ENCODE measurements at regions of chr9 and their contacts with region 1.

Region 1: DNA sequence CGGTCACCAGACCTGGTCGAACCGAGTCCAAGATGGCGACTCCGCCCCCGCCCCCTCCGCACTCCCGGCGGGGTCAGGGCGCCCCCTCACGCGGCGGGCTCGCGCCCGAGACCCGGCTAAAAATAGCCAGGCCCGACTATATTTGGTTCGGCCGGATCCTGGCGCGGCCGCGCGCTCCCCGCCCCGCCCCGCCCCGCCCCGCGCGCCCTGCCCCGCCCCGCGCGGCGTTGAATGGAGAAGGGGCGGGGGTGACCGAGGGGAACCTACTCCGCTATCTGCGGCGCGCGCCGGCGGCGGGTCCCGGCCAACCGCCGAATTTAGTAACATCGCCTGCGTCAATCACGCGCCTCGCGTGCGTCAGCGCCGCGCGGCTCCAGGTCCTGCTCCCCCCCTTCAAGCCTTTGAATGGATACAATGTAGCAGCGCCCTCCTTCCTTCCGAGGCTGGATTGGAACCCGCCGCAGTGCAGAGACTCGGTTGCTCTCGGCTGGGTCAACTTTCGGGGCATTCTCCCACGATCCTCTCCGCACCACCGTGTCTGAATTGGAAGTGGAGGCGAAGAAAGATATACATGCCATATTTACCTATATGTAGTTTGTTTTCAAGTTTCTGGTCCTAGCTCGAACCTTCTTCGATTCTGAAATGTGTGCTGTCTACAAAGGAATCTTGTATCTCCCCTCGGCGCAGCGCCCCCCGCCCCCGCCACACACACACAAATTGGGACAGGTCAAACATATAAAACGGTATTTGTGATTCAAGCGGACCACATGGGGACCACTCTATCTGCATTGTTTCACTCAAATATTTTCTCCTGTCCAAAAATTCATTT is 1.6 kb upstream of the NR4A3 start:
- DNase-seq: peak; percentile 92 to 96 (median 95)
- H3K4me3 ChIP-seq: peak overlapping the region; percentile 69
- H3K4me3 Mint-ChIP-seq: peak overlapping the region; percentile 96 to 100 (median 98)
- H3K27ac ChIP-seq: peak overlapping the region; percentile 91
- H3K27ac Mint-ChIP-seq: peak overlapping the region; percentile 98 to 100 (median 100)
- H3K4me1 ChIP-seq: peaks cover 42% of the 10 kb centered on the region
- H3K4me1 Mint-ChIP-seq: peaks cover 48 to 56% (median 49%) of the 10 kb centered on the region in 3 donors
- H3K27me3 ChIP-seq: peaks cover 23% of the 10 kb centered on the region
- H3K27me3 Mint-ChIP-seq: peaks cover 17 to 41% of the 10 kb centered on the region in 2 donors

Region 2: DNA sequence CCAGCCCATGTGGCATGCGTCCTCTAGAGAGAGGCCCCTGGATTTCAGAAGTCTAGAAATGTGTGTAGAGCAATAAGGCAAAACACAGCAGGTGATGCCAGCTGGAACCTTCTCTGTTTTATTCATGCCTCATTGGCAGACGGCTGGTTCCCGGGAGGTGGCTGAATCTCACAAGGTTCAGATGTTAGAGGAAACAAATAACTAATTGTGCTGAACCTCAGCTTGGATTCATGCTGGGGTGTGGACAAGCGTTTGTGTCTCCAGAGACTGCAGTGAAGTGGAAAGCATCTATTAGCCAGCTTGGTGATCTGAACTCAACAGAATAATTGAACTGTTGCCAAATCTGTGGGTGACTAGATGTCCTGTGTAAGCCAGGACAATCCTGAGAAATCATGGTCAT is 129.5 kb before region 1 on chr9:
- CTCF ChIA-PET with region 1: no interaction called
- POLR2A ChIA-PET with region 1: no interaction called
- DNase-seq: no peak
- H3K4me3 ChIP-seq: no peak overlapping the region
- H3K4me3 Mint-ChIP-seq: no peak overlapping the region
- H3K27ac ChIP-seq: no peak overlapping the region
- H3K27ac Mint-ChIP-seq: no peak overlapping the region
- H3K4me1 ChIP-seq: no peaks in the 10 kb centered on the region
- H3K4me1 Mint-ChIP-seq: no peaks in the 10 kb centered on the region
- H3K27me3 ChIP-seq: no peaks in the 10 kb centered on the region
- H3K27me3 Mint-ChIP-seq: peaks cover 6 to 13% of the 10 kb centered on the region in 2 donors

Region 3: GRCh38 chr9:99778308-99778707 is 41.8 kb before region 1 on chr9:
- CTCF ChIA-PET with region 1: no interaction called
- POLR2A ChIA-PET with region 1: no interaction called
- DNase-seq: no peak
- H3K4me3 ChIP-seq: no peak overlapping the region
- H3K4me3 Mint-ChIP-seq: no peak overlapping the region
- H3K27ac ChIP-seq: no peak overlapping the region
- H3K27ac Mint-ChIP-seq: no peak overlapping the region
- H3K4me1 ChIP-seq: no peaks in the 10 kb centered on the region
- H3K4me1 Mint-ChIP-seq: no peaks in the 10 kb centered on the region
- H3K27me3 ChIP-seq: peaks cover 10% of the 10 kb centered on the region
- H3K27me3 Mint-ChIP-seq: peaks cover 6 to 11% of the 10 kb centered on the region in 2 donors

Region 4: GRCh38 chr9:99906403-99907207 is 86.5 kb after region 1 on chr9 and contains the start of gene STX17:
- CTCF ChIA-PET with region 1: interaction called, 12 read pairs
- POLR2A ChIA-PET with region 1: interaction called, 23 read pairs
- DNase-seq: peak; percentile 76 to 90 (median 86)
- H3K4me3 ChIP-seq: peak within 1 kb of the TSS; percentile 94
- H3K4me3 Mint-ChIP-seq: peak within 1 kb of the TSS; percentile 96 to 99 (median 98)
- H3K27ac ChIP-seq: peak within 1 kb of the TSS; percentile 99
- H3K27ac Mint-ChIP-seq: peak within 1 kb of the TSS; percentile 99 to 100 (median 100)
- H3K4me1 ChIP-seq: peaks cover 23% of the 10 kb centered on the region
- H3K4me1 Mint-ChIP-seq: peaks cover 30 to 45% (median 43%) of the 10 kb centered on the region in 3 donors
- H3K27me3 ChIP-seq: no peaks in the 10 kb centered on the region
- H3K27me3 Mint-ChIP-seq: no peaks in the 10 kb centered on the region
- total RNA-seq, gene STX17: 23.4 to 27.9 TPM

Measured in CD8-positive, alpha-beta memory T cell (primary cell).